Head of caudate nucleus (tissue), 42 donors: ENCODE measurements at regions of chr15 and their contacts with region 1.

Region 1: DNA sequence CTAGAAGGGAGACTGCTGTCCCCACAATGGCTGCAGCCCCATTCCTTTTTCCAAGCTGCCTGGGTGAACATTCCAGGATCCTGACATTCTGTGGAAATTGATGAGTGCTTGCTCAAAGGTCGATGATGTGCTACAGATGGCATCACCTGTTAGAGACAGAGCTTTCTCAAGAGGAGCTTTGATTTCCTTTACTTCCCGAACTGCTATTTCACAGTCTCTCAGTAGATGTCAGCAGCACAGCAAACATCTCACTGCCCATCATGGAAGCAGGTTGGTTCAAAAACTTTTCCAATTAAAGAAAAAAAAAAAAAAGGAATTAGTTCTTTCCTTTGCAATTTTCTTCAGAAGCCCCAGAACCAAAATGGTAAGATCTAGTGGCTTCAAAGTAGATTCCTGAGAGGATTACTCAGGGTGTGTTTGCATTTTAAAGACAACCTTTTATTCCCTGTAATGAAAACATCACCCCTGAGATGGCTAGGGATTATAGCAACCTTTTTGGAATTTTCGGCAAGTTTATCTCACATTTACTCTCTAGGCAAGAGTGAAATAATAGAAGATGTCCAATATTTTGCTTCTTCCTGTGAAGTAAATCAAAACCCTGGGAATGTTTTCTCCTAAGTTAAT is 44.8 kb downstream of the POLR2M start:
- DNase-seq: peak in 22 of 42 donors; percentile 16 to 70 (median 44)

Region 2: DNA sequence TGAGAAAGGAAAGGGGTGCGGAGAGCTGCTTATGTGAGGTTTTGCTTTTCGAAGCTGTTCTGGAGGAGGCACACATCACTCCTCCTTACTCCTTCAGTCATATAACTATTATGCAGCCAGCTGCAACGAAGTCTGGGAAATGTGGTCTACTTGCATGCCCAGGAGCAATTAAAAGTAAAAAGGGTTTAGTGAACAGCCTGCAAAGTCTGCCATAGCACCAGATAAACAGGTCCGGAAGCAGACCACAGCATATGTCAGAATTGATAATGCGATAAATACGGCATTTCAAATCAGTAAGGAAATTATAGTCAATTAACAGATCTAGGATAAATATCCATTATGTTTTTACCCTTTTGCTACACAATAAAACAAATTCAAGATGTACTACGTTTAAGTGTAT is 54.7 kb after region 1 on chr15:
- intact Hi-C with region 1: no loop called
- DNase-seq: no peak

Region 3: DNA sequence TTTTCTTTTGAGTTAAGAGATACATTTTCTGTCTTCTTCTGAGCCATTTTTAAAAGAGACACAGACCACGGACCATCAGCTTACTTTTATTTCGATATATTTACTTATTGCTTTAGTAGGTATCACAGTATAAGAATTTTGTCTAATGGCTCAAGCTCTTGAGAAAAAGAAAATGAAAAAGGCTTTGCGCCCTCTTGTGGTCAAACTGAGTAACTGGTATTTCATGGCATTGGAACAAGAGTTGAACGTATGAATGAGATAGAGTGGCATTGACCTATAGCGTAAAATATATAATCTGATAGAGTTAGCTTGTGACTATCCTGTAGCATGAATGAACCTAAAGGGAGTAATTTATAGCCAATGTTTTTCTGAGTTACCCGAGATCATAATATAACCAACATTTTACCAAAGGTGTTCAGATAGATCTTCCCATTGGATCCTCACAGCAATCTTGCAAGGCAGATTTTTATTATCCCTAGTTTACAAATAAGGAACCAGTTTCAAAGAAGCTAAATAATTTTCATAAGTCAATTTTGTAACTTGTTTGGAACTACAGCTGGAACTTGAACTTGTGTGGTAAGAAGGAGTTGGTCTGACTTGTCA is 109.8 kb after region 1 on chr15:
- intact Hi-C with region 1: loop called (anchors 2 kb)
- DNase-seq: peak in 21 of 42 donors; percentile 12 to 82 (median 52)